Activated CD8-positive, alpha-beta memory T cell treated with anti-CD3 and anti-CD28 coated beads, Interleukin-2, amount 10 ng/mL, durations not matched to agents 7 days and 5 days (primary cell): ENCODE measurements at regions of chr10 and their contacts with region 1.

Region 1: GRCh38 chr10:51389415-51390321 is 309.7 kb downstream of the CSTF2T start:
- DNase-seq: peak; percentile 57
- ATAC-seq: no peak
- H3K4me3 Mint-ChIP-seq: no peak overlapping the region
- H3K27ac Mint-ChIP-seq: no peak overlapping the region
- H3K4me1 Mint-ChIP-seq: no peaks in the 10 kb centered on the region
- H3K27me3 Mint-ChIP-seq: no peaks in the 10 kb centered on the region

Region 2: DNA sequence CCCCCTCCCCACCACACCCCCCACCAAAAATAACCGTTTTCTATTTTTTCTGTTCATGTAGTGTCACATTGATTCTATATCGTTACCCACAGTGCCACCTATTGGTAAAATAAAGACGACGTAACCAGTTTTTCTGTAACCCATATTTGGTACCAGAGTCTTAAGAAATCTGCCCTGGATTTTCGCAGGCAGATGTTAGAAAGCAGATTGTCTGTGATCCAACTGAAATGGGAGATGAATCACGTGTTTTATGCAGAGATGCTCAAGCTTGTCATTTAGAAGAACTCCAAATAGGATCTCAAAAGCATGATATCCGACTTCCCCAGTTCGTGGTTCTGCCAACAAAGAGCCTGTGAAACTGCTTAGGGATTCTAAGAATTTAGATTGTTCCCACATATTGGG is 570.8 kb after region 1 on chr10:
- CTCF ChIA-PET with region 1: interaction called, 26 read pairs
- DNase-seq: no peak
- ATAC-seq: no peak
- H3K4me3 Mint-ChIP-seq: no peak overlapping the region
- H3K27ac Mint-ChIP-seq: no peak overlapping the region
- H3K4me1 Mint-ChIP-seq: no peaks in the 10 kb centered on the region
- H3K27me3 Mint-ChIP-seq: peaks cover 15% of the 10 kb centered on the region

Region 3: GRCh38 chr10:52004342-52004949 is 614.8 kb after region 1 on chr10:
- CTCF ChIA-PET with region 1: interaction called, 10 read pairs
- DNase-seq: no peak
- ATAC-seq: no peak
- H3K4me3 Mint-ChIP-seq: no peak overlapping the region
- H3K27ac Mint-ChIP-seq: no peak overlapping the region
- H3K4me1 Mint-ChIP-seq: no peaks in the 10 kb centered on the region
- H3K27me3 Mint-ChIP-seq: peaks cover 8% of the 10 kb centered on the region